CD8-positive, alpha-beta T cell (primary cell): ENCODE measurements at regions of chr2 and their contacts with region 1.

Region 1: GRCh38 chr2:47767880-47768609 is 14.9 kb upstream of the MSH6 start:
- DNase-seq: peak; percentile 56 to 86 (median 74)
- ATAC-seq: peak; percentile 92
- H3K4me3 ChIP-seq: no peak overlapping the region
- H3K4me3 Mint-ChIP-seq: peak overlapping the region; percentile 41
- H3K27ac ChIP-seq: no peak overlapping the region
- H3K27ac Mint-ChIP-seq: no peak overlapping the region
- H3K4me1 ChIP-seq: peaks cover 7% of the 10 kb centered on the region
- H3K4me1 Mint-ChIP-seq: peaks cover 3% of the 10 kb centered on the region
- H3K27me3 ChIP-seq: peaks cover 0 to 3% of the 10 kb centered on the region in 2 experiments
- H3K27me3 Mint-ChIP-seq: peaks cover 3% of the 10 kb centered on the region
- CTCF ChIP-seq: peak; percentile 97

Region 2: DNA sequence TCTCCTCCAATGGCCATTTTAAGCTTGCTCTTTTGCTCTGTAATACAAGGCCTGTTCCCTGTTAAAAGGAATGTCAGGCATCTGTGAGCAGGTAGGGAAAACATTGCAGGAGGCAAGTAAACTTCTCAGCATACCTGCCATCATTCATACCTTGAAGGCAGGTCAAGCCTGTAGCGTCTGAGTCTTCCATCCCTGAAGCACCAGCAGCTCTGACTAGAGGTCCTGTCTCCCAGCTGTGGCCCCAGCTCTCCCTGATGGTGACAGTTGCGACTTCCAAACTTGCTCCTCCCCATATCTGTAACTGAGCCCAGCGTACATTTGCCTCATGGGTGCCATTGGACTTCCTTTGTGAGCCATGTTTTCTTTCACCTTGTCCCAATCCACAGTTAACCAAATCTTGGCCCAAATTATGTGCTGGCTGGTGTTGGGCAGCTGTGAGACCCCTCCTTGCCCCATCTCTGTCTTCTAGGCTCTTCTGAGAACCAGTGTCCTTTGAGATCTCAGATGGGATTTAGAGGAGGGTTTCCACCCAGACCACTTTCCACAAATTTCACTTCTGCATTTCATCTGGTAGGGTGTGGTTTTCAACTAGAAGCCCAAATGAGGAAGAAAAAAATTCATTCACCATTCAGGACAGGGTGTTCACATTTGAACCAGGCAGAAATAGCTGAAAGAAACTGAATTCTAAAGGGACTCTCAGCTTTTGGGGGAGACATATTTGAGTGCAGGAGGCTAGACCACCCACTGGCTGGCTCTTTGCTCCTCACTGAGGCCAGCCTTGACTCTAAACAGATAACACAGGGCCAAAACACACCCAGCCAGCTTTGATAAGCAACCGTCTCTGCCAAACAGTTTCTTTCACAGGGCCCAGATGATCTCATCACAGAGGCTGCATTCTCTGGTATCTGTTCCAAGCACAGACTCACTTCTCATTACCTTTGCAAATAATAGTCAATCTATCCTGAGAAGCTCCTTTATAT is 431.5 kb before region 1 on chr2:
- CTCF ChIA-PET with region 1: interaction called, 125 read pairs
- POLR2A ChIA-PET with region 1: no interaction called
- intact Hi-C with region 1: loop called in 1 of 2 experiments (anchors 1 kb)
- DNase-seq: no peak
- ATAC-seq: no peak
- H3K4me3 ChIP-seq: no peak overlapping the region
- H3K4me3 Mint-ChIP-seq: no peak overlapping the region
- H3K27ac ChIP-seq: no peak overlapping the region
- H3K27ac Mint-ChIP-seq: no peak overlapping the region
- H3K4me1 ChIP-seq: no peaks in the 10 kb centered on the region
- H3K4me1 Mint-ChIP-seq: no peaks in the 10 kb centered on the region
- H3K27me3 ChIP-seq: no peaks in the 10 kb centered on the region
- H3K27me3 Mint-ChIP-seq: peaks cover 7% of the 10 kb centered on the region
- CTCF ChIP-seq: no peak

Region 3: GRCh38 chr2:47520825-47521665 is 247.0 kb before region 1 on chr2:
- CTCF ChIA-PET with region 1: interaction called, 6 read pairs
- POLR2A ChIA-PET with region 1: no interaction called
- intact Hi-C with region 1: loop called in 1 of 2 experiments (anchors 5 kb)
- DNase-seq: peak; percentile 46 to 86 (median 72)
- ATAC-seq: peak; percentile 87
- H3K4me3 ChIP-seq: peak overlapping the region; percentile 52 to 73
- H3K4me3 Mint-ChIP-seq: peak overlapping the region; percentile 89
- H3K27ac ChIP-seq: peak overlapping the region; percentile 37 to 66
- H3K27ac Mint-ChIP-seq: peak overlapping the region; percentile 90
- H3K4me1 ChIP-seq: peaks cover 14% of the 10 kb centered on the region
- H3K4me1 Mint-ChIP-seq: peaks cover 16% of the 10 kb centered on the region
- H3K27me3 ChIP-seq: no peaks in the 10 kb centered on the region
- H3K27me3 Mint-ChIP-seq: peaks cover 2% of the 10 kb centered on the region
- CTCF ChIP-seq: peak; percentile 25

Region 4: GRCh38 chr2:47950340-47951301 is 182.6 kb after region 1 on chr2:
- CTCF ChIA-PET with region 1: no interaction called
- POLR2A ChIA-PET with region 1: no interaction called
- intact Hi-C with region 1: no loop called
- DNase-seq: no peak
- ATAC-seq: no peak
- H3K4me3 ChIP-seq: no peak overlapping the region
- H3K4me3 Mint-ChIP-seq: no peak overlapping the region
- H3K27ac ChIP-seq: no peak overlapping the region
- H3K27ac Mint-ChIP-seq: no peak overlapping the region
- H3K4me1 ChIP-seq: no peaks in the 10 kb centered on the region
- H3K4me1 Mint-ChIP-seq: peaks cover 3% of the 10 kb centered on the region
- H3K27me3 ChIP-seq: peaks cover 0 to 3% of the 10 kb centered on the region in 2 experiments
- H3K27me3 Mint-ChIP-seq: peaks cover 10% of the 10 kb centered on the region
- CTCF ChIP-seq: no peak

Region 5: DNA sequence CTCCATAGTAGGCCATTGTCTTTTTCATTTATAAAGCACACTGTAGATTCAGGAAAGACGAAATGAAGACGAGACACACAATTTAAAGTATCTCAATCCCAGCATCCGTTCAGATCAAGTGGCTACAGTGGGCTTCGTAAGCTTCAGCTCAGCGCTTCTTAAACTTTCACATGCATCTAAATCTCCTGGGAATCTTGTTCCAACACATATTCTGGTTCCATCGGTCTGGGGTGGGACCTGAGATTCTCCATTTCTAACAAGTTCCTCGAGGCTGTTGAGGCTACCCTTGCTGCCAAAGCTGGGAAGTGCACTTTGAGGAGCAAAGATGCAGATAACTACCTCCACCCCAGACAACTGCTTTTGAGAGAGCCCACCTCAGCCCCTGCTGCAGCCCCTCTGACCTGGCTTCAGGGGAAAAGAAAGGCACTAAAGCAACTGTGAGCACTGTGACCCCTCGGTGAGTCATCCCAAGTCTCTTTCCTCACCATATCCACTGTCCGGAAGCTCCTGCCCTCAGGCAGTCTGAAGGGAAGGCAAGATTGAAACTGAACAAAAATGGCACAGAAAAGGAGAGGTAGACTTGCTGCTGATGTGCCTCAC is 339.4 kb after region 1 on chr2:
- CTCF ChIA-PET with region 1: interaction called, 7 read pairs
- POLR2A ChIA-PET with region 1: interaction called, 3 read pairs
- intact Hi-C with region 1: loop called in 1 of 2 experiments (anchors 1 kb)
- DNase-seq: no peak
- ATAC-seq: no peak
- H3K4me3 ChIP-seq: no peak overlapping the region
- H3K4me3 Mint-ChIP-seq: no peak overlapping the region
- H3K27ac ChIP-seq: no peak overlapping the region
- H3K27ac Mint-ChIP-seq: no peak overlapping the region
- H3K4me1 ChIP-seq: peaks cover 11% of the 10 kb centered on the region
- H3K4me1 Mint-ChIP-seq: peaks cover 17% of the 10 kb centered on the region
- H3K27me3 ChIP-seq: peaks cover 0 to 4% of the 10 kb centered on the region in 2 experiments
- H3K27me3 Mint-ChIP-seq: no peaks in the 10 kb centered on the region
- CTCF ChIP-seq: no peak